ENCODE measurements at regions of chr6 and their contacts with region 1.

Region 1: GRCh38 chr6:33700391-33701050 is 11.0 kb downstream of the UQCC2 start:
- DNase-seq: peak; percentile 60 to 77 (median 61)
- H3K4me3 ChIP-seq: no peak overlapping the region
- H3K4me3 Mint-ChIP-seq: no peak overlapping the region
- H3K27ac ChIP-seq: no peak overlapping the region
- H3K27ac Mint-ChIP-seq: peak overlapping the region; percentile 8 to 94 (median 74)
- H3K4me1 ChIP-seq: peaks cover 33% of the 10 kb centered on the region
- H3K4me1 Mint-ChIP-seq: peaks cover 25 to 30% (median 29%) of the 10 kb centered on the region in 3 donors
- H3K27me3 ChIP-seq: no peaks in the 10 kb centered on the region
- H3K27me3 Mint-ChIP-seq: no peaks in the 10 kb centered on the region

Region 2: GRCh38 chr6:33579828-33580714 is 120.5 kb before region 1 on chr6 and contains the start of gene BAK1:
- CTCF ChIA-PET with region 1: interaction called, 29 read pairs
- POLR2A ChIA-PET with region 1: interaction called, 11 read pairs
- DNase-seq: peak; percentile 79 to 91 (median 81)
- H3K4me3 ChIP-seq: peak within 1 kb of the TSS; percentile 98
- H3K4me3 Mint-ChIP-seq: peak within 1 kb of the TSS; percentile 92 to 99 (median 95)
- H3K27ac ChIP-seq: peak within 1 kb of the TSS; percentile 90
- H3K27ac Mint-ChIP-seq: peak within 1 kb of the TSS; percentile 90 to 100 (median 98)
- H3K4me1 ChIP-seq: peaks cover 26% of the 10 kb centered on the region
- H3K4me1 Mint-ChIP-seq: peaks cover 31 to 42% (median 31%) of the 10 kb centered on the region in 3 donors
- H3K27me3 ChIP-seq: no peaks in the 10 kb centered on the region
- H3K27me3 Mint-ChIP-seq: no peaks in the 10 kb centered on the region
- total RNA-seq, gene BAK1: 48.5 to 50.1 TPM

Region 3: GRCh38 chr6:33711140-33712129 is 10.9 kb after region 1 on chr6 and contains the start of gene UQCC2:
- CTCF ChIA-PET with region 1: interaction called, 20 read pairs
- POLR2A ChIA-PET with region 1: interaction called, 3 read pairs
- DNase-seq: peak; percentile 96 to 99 (median 98)
- H3K4me3 ChIP-seq: peak within 1 kb of the TSS; percentile 98
- H3K4me3 Mint-ChIP-seq: peak within 1 kb of the TSS; percentile 98 to 100 (median 99)
- H3K27ac ChIP-seq: peak within 1 kb of the TSS; percentile 91
- H3K27ac Mint-ChIP-seq: peak within 1 kb of the TSS; percentile 96 to 99 (median 98)
- H3K4me1 ChIP-seq: peaks cover 18% of the 10 kb centered on the region
- H3K4me1 Mint-ChIP-seq: peaks cover 26 to 39% (median 39%) of the 10 kb centered on the region in 3 donors
- H3K27me3 ChIP-seq: no peaks in the 10 kb centered on the region
- H3K27me3 Mint-ChIP-seq: peaks cover 0 to 2% of the 10 kb centered on the region in 2 donors
- total RNA-seq, gene UQCC2: 150 to 157 TPM